Breast epithelium (tissue), 4 donors: ENCODE measurements at regions of chr18 and their contacts with region 1.

Region 1: GRCh38 chr18:24915547-24915946 is 436.4 kb downstream of the ZNF521 start:
- DNase-seq: no peak
- H3K4me3 ChIP-seq: no peak overlapping the region
- H3K27ac ChIP-seq: no peak overlapping the region
- H3K4me1 ChIP-seq: no peaks in the 10 kb centered on the region
- H3K27me3 ChIP-seq: no peaks in the 10 kb centered on the region
- CTCF ChIP-seq: no peak
- POLR2A ChIP-seq: no peak

Region 2: GRCh38 chr18:26370037-26370436 is 1454.5 kb after region 1 on chr18:
- intact Hi-C with region 1: loop called (anchors 5 kb)
- DNase-seq: no peak
- H3K4me3 ChIP-seq: no peak overlapping the region
- H3K27ac ChIP-seq: no peak overlapping the region
- H3K4me1 ChIP-seq: no peaks in the 10 kb centered on the region
- H3K27me3 ChIP-seq: no peaks in the 10 kb centered on the region
- CTCF ChIP-seq: no peak
- POLR2A ChIP-seq: no peak